ENCODE measurements at regions of chr6 and their contacts with region 1.

Region 1: DNA sequence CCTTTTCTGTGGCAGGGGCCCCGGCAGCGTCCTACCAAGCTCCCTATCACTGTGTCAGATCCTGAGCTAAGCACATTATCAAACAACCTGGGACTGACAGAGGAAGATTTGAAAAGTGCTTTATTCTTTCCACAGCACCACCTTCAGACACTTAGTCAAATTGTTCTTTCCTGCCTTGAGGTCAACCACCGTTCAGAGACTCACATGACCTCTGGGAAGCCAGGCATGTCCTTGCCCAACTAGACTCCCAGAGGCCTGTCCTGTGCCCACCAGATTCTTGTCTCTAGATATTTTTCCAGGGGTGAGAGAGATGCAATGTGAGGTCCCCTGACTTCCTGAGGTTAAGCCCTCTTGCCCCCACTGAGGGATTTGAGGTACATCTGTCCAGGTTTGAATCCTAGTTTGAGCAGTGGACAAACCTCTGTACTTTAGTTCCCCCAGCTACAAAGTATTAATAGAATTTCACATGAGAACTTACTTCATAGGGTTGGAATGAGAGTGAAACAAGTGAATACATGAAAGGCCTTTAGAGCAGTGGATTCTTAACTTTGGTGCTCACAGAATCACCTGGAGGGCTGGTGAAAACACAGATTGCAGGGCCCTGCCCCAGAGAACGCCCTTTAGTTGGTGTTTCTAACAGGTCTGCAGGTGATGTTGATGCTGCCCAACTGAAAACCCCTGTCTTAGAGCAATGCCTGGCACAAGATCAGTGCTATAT is 179.8 kb downstream of the CLIC5 start:
- DNase-seq: peak; percentile 82
- H3K4me3 ChIP-seq: no peak overlapping the region
- H3K27ac ChIP-seq: peak overlapping the region; percentile 51
- H3K4me1 ChIP-seq: peaks cover 27% of the 10 kb centered on the region
- H3K27me3 ChIP-seq: no peaks in the 10 kb centered on the region
- CTCF ChIP-seq: peak; percentile 20 to 30

Region 2: DNA sequence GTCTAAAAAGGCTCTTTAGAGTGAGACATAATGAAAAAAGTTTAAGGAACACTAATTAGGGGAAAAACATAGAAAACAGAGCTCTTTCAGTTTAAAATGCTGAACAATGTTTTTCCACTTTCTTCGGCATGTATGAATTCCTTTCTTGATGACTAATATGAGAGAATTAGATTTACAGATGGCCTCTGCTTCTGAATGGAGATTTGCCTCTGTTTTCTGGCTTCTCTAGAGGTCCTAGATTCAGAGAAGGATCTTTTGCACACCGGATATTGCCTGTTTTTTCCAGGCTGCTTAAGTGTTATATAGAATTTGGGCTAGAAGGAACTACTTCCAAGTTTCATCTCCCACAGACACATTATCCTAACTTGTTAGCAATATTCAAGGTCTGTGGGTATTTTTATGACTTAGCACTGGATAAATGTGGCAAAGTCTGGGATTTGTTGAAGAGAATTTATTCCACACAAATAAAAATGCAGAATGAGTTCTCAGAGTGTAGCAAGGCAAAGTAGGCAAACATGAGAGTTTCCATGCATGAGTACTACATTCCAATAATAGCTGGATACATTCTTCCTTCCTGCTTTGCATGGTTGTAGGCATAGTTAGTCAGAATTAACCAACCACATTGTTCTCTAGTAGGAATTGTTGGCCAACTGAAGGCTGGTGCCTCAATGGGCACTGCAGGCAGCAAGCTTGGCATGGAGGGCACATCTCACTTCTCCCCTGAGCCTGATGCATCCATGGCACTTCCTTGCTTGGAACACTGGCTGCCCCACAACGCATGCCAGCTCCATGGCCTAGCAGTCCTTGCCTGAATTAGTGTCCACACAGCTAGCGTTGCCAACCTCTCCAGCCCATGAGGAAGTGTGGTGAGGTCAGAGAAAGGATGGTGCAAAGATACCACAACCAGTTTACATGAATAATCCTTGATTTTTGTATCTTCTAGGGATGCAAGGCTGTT is 44.4 kb before region 1 on chr6:
- CTCF ChIA-PET with region 1: no interaction called
- dilution Hi-C with region 1: no loop called
- in situ Hi-C with region 1: no loop called
- intact Hi-C with region 1: loop called (anchors 5 kb)
- DNase-seq: peak; percentile 63
- H3K4me3 ChIP-seq: no peak overlapping the region
- H3K27ac ChIP-seq: peak overlapping the region; percentile 54
- H3K4me1 ChIP-seq: peaks cover 19% of the 10 kb centered on the region
- H3K27me3 ChIP-seq: no peaks in the 10 kb centered on the region
- CTCF ChIP-seq: no peak

Region 3: DNA sequence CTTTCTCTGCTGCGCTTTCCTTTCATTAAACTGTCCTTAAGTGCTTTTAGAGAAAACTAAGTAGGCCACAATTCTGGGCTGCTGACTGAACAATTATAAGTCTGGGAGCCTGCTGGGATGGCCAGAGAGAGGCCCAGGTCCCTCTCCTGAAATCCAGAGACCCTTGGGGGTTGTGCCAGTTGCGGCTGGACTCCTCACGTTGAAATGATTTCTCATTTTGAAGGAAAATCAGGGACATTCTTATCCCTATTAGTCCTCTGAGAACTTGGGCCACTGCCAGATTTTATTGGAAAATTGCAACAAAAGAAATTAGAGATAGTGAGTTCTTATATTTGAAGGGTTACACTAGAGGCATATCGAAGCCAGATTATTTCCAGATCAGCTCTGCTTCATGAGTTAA is 34.7 kb after region 1 on chr6:
- CTCF ChIA-PET with region 1: no interaction called
- dilution Hi-C with region 1: no loop called
- in situ Hi-C with region 1: no loop called
- intact Hi-C with region 1: no loop called
- DNase-seq: no peak
- H3K4me3 ChIP-seq: no peak overlapping the region
- H3K27ac ChIP-seq: no peak overlapping the region
- H3K4me1 ChIP-seq: peaks cover 4% of the 10 kb centered on the region
- H3K27me3 ChIP-seq: no peaks in the 10 kb centered on the region
- CTCF ChIP-seq: no peak